Activated CD4-positive, alpha-beta memory T cell treated with anti-CD3 and anti-CD28 coated beads, Interleukin-2, amount 10 ng/mL, durations not matched to agents 7 days and 5 days (primary cell): ENCODE measurements at regions of chr11 and their contacts with region 1.

Region 1: DNA sequence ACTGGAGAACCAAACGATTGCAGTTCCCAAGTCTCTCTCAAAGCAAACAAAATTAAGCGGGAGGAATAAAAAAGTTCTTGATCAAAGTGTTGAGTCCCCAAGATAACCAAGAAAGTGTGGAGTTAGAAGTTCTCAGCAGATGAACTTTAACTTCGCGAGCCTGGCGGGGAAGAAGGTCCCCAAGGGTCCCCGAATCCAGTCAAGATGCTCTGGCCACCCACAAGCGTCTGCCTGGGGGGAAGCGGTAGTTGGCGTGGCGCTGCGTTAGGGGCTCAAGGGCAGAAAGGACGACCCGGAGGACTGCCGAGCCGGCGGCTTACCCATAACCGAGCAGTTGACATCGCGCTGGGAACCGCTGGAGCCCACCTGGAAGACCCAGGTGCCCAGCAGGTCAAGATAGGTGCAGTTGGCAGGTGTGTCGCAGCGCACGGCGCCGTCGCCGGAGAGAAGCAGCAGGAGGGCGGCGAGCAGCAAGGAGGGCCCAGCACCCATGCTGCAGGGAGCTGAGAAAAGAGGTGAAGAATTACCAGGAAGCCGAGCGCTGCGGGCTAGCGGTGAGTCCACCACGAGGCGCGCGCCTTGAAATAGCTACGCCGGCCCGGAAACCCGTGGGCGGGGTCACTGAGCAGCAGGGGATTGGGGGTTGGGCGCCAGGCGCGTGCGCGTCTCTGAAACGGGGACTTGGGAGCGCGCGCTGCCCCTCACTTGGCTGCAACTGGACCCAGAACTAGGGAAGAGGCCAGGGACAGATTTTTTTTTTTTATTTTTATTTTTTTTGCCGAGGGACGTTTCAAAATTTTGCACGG is at the start of gene CTSC:
- DNase-seq: peak; percentile 97
- H3K4me3 Mint-ChIP-seq: peak within 1 kb of the TSS; percentile 89
- H3K27ac Mint-ChIP-seq: peak within 1 kb of the TSS; percentile 98
- H3K4me1 Mint-ChIP-seq: peaks cover 55% of the 10 kb centered on the region
- H3K27me3 Mint-ChIP-seq: no peaks in the 10 kb centered on the region
- total RNA-seq, gene CTSC: 321 to 323 TPM

Region 2: GRCh38 chr11:88315015-88315414 is 22.4 kb before region 1 on chr11:
- CTCF ChIA-PET with region 1: no interaction called
- POLR2A ChIA-PET with region 1: no interaction called
- DNase-seq: no peak
- H3K4me3 Mint-ChIP-seq: no peak overlapping the region
- H3K27ac Mint-ChIP-seq: no peak overlapping the region
- H3K4me1 Mint-ChIP-seq: peaks cover 42% of the 10 kb centered on the region
- H3K27me3 Mint-ChIP-seq: no peaks in the 10 kb centered on the region

Region 3: DNA sequence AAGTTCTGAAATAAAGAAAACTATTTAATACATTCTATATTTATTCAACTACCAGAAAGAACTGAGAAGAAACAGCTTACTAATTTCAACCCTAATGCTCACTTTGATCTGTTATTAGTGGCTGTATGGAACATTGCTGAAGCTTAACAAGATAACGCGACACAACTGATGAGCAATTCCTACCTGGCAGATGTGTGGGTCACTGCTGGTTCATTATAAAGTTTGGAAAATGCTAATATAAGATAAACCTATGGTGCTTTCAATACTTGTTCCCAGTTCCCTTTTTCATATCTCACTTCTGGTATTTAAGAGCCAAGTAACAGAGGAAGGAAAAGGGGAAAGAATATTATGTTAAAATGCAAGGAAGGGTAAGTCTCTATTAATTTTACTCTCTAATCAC is 10.3 kb before region 1 on chr11:
- CTCF ChIA-PET with region 1: interaction called, 18 read pairs
- POLR2A ChIA-PET with region 1: interaction called, 98 read pairs
- DNase-seq: no peak
- H3K4me3 Mint-ChIP-seq: peak overlapping the region; percentile 5
- H3K27ac Mint-ChIP-seq: no peak overlapping the region
- H3K4me1 Mint-ChIP-seq: peaks cover 95% of the 10 kb centered on the region
- H3K27me3 Mint-ChIP-seq: no peaks in the 10 kb centered on the region

Region 4: GRCh38 chr11:88367310-88367709 is 29.9 kb after region 1 on chr11:
- CTCF ChIA-PET with region 1: interaction called, 3 read pairs
- POLR2A ChIA-PET with region 1: interaction called, 13 read pairs
- DNase-seq: no peak
- H3K4me3 Mint-ChIP-seq: no peak overlapping the region
- H3K27ac Mint-ChIP-seq: no peak overlapping the region
- H3K4me1 Mint-ChIP-seq: peaks cover 23% of the 10 kb centered on the region
- H3K27me3 Mint-ChIP-seq: no peaks in the 10 kb centered on the region

Region 5: GRCh38 chr11:88421530-88421929 is 84.1 kb after region 1 on chr11:
- CTCF ChIA-PET with region 1: interaction called, 7 read pairs
- POLR2A ChIA-PET with region 1: interaction called, 165 read pairs
- DNase-seq: peak; percentile 67
- H3K4me3 Mint-ChIP-seq: peak overlapping the region; percentile 70
- H3K27ac Mint-ChIP-seq: peak overlapping the region; percentile 97
- H3K4me1 Mint-ChIP-seq: peaks cover 83% of the 10 kb centered on the region
- H3K27me3 Mint-ChIP-seq: no peaks in the 10 kb centered on the region

Region 6: DNA sequence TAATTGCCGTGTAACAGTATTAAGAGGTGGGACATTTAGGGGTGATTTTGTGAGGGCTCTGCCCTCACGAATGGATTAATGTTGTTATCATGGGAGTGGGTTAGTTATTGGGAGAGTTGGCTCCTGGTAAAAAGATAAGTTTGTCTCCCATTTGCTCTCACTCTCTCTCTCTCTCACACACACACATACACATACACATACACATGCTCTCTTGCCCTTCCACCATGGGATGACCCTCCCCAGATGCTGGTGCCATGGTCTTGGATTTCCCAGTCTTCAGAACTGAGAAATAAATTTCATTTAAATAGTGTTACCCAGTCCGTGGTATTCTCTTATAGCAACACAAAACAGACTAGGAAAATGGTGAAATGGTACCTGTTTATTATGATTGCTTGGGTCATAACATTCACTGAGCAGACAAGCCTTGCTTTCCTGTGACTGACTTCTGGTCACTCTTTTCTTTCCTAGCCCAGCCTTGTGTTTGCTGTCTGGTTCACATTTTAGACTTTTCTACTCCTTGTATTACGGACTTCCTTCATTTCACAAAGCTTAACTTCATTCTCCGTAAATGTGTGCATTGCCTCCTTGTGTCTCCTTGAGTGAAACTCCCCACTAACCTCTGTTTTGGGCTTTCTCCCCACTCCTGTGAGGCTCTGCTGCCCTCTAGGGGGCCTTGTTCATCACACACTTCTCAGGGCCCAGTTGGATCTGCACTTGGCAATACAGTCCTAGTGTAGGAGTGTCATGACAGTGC is 206.7 kb after region 1 on chr11:
- CTCF ChIA-PET with region 1: interaction called, 12 read pairs
- POLR2A ChIA-PET with region 1: interaction called, 15 read pairs
- DNase-seq: peak; percentile 87
- H3K4me3 Mint-ChIP-seq: no peak overlapping the region
- H3K27ac Mint-ChIP-seq: peak overlapping the region; percentile 7
- H3K4me1 Mint-ChIP-seq: peaks cover 6% of the 10 kb centered on the region
- H3K27me3 Mint-ChIP-seq: peaks cover 10% of the 10 kb centered on the region